ENCODE measurements at regions of chr11 and their contacts with region 1.

Region 1: DNA sequence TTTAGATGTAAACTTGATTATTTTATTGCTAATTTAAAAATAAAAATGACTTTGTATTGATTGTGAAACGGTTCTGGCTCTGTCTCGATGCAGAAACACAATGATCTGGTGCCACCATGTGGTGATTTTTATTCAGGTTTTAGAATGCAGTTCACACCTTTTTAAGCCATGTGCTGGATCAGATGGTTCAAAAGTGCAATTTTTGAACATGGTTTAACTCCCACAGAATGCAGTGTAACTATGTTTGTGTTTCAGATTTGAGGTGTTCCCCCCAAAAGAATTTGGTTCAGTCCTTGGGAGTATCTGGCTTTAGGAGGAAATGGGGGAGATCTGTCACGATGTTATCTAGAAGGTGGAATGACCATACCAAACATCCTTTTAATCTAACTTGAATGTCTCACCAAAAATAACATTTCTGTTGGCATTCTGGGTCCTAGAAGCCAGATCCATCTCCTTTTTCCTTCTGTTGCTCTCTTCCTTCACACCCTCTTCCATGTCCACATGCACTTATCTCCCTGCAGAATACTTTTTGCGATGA is 7.9 kb downstream of the MRPL16 start:
- DNase-seq: peak in 2 of 10 donors; percentile 14 to 17

Region 2: DNA sequence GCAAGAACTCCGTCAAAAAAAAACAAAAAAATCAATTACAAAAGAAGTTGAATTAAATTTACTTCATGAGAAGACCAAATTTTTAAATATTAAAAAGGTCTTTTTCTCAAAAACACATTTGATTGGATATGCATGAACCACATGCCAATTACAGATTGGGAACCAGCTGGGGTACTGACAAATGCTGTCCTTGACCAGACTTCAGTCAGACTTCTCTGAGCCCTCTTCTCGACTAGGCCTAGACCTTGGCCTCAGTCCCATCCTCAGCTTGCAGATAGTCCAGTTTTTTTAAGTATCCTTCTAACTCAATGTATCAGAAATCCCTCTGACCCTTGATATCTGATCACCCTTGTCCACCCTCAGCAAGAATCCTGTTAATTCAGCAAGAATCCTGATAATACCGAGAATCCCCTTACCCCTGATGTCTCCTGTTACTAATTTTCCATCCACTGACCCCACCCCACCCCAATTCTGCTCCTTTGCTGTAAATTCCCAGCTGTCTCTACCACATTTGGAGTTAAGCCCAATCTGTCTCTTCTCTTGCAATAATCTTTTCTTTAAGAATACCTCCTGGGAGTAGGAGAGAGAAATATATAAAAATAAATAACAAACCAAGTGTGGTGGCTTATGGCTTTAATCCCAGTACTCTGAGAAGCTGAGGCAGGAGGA is 260.4 kb before region 1 on chr11:
- intact Hi-C with region 1: loop called (anchors 1 kb)
- DNase-seq: no peak

Region 3: GRCh38 chr11:59923813-59924212 is 121.1 kb after region 1 on chr11:
- intact Hi-C with region 1: no loop called
- DNase-seq: no peak

Measured in posterior cingulate gyrus (tissue), 11 donors.